AG04449 (cell line): ENCODE measurements at regions of chr14 and their contacts with region 1.

Region 1: DNA sequence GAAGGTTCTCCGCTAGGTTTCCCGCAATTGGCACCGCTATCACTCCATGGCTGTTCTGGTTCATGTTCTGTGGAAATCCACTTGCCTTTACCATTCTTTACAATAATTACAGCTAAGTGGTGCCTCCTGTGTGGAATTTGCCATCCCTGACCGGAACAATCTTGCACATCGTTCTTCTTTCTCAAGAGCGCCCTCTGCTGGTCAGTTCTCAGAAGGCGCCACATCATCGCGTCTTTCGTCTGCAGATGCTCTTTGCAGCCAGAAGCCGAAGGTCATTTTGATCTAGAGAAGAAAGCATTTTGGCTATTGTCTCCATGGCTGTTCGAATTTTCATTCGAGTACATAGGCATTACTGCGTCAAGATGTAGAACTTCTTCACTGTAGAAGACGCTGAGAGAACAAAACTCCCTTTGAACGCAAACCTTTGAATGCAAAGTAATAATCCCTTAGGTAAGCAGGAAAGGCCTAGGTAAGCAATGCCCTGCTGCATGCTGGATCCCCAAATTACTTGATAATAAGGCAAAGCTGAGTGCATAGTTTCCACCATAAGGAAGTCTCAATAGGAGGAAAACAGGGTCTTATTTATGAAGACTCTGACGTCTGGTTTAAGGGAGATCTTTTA is 10.1 kb upstream of the RTRAF start:
- DNase-seq: no peak
- H3K4me3 ChIP-seq: no peak overlapping the region
- CTCF ChIP-seq: peak; percentile 82

Region 2: DNA sequence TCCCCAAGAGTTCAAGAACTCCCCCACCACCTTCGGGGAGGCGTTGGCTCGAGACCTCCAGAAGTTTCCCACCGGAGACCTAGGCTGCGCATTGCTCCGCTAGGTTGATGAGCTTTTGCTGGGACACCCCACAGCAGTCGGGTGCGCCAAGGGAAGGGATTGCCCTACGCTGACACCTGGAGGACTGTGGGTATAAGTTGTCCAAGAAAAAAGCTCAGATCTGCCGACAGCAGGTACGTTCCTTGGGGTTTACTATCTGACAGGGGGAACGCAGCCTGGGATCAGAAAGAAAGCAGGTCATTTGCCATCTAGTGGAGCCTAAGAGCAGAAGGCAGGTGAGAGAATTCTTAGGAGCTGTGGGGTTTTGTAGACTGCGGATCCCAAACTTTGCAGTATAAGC is 228.7 kb before region 1 on chr14:
- CTCF ChIA-PET with region 1: no interaction called
- POLR2A ChIA-PET with region 1: no interaction called
- DNase-seq: no peak
- H3K4me3 ChIP-seq: no peak overlapping the region
- CTCF ChIP-seq: no peak

Region 3: DNA sequence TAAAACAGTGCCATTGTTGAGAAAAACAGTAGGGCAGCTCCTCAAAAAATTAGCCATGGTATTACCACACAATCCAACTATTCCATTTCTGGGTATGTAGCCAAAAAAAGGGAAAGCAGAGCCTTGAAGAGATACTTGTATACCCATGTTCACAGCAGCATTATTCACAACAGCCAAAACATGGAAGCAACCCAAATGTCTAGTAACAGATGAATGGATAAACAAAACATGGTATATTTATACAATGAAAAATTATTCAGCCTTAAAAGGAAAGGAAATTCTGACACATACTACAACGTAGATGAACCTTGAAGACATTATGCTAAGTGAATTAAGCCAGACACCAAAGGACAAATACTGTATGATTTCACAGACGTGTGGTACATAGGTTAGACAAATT is 186.4 kb before region 1 on chr14:
- CTCF ChIA-PET with region 1: interaction called, 11 read pairs
- POLR2A ChIA-PET with region 1: no interaction called
- DNase-seq: no peak
- H3K4me3 ChIP-seq: no peak overlapping the region
- CTCF ChIP-seq: no peak

Region 4: GRCh38 chr14:51828017-51828797 is 151.0 kb before region 1 on chr14:
- CTCF ChIA-PET with region 1: interaction called, 10 read pairs
- POLR2A ChIA-PET with region 1: no interaction called
- DNase-seq: no peak
- H3K4me3 ChIP-seq: no peak overlapping the region
- CTCF ChIP-seq: no peak

Region 5: GRCh38 chr14:51873221-51873893 is 105.8 kb before region 1 on chr14:
- CTCF ChIA-PET with region 1: no interaction called
- POLR2A ChIA-PET with region 1: no interaction called
- DNase-seq: peak; percentile 93
- H3K4me3 ChIP-seq: no peak overlapping the region
- CTCF ChIP-seq: no peak

Region 6: GRCh38 chr14:51957950-51958349 is 21.2 kb before region 1 on chr14:
- CTCF ChIA-PET with region 1: interaction called, 143 read pairs
- POLR2A ChIA-PET with region 1: no interaction called
- DNase-seq: no peak
- H3K4me3 ChIP-seq: no peak overlapping the region
- CTCF ChIP-seq: no peak

Region 7: GRCh38 chr14:51989293-51990234 is 10.4 kb after region 1 on chr14 and contains the start of gene RTRAF:
- CTCF ChIA-PET with region 1: interaction called, 97 read pairs
- POLR2A ChIA-PET with region 1: no interaction called
- DNase-seq: peak; percentile 45
- H3K4me3 ChIP-seq: peak within 1 kb of the TSS; percentile 86
- CTCF ChIP-seq: no peak

Region 8: GRCh38 chr14:52042371-52043289 is 63.4 kb after region 1 on chr14:
- CTCF ChIA-PET with region 1: no interaction called
- POLR2A ChIA-PET with region 1: no interaction called
- DNase-seq: no peak
- H3K4me3 ChIP-seq: no peak overlapping the region
- CTCF ChIP-seq: no peak

Region 9: GRCh38 chr14:53190938-53191337 is 1211.7 kb after region 1 on chr14:
- CTCF ChIA-PET with region 1: no interaction called
- POLR2A ChIA-PET with region 1: no interaction called
- DNase-seq: no peak
- H3K4me3 ChIP-seq: no peak overlapping the region
- CTCF ChIP-seq: no peak